Colonic mucosa (tissue), 4 donors: ENCODE measurements at regions of chr12 and their contacts with region 1.

Region 1: DNA sequence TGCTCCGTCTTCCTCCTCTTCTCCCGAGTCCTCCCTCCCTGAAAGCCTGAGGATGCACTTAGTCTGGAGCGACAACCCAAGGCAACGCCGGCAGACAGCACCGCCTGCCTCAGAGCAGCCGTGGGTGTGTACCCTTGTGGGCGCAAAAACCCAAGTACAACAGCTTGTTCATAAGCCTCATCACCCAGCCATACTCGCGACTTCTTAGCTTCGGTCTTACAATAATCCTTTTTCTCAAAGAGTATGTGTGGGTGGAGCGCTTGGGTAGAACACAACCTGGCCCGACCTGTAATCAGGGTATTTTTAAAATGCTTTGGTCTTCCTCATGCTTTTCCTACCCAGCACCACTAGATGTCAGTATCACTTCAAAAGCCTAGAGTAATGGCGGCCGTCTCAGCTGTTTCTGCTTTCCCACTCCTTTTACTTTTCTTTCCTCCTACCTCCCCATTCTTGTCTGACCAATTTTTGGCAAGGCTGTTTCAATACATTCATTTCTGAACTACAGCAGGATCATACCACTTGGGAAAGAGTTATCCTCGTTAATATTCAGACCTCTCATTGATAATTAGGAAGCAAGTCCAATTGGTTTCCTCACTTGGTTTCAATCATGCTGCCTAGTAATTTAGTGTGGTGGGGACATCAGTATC is 198.9 kb downstream of the EPS8 start:
- DNase-seq: peak; percentile 70
- H3K4me3 ChIP-seq: peak overlapping the region; percentile 7
- H3K27ac ChIP-seq: no peak overlapping the region
- H3K4me1 ChIP-seq: no peaks in the 10 kb centered on the region
- H3K27me3 ChIP-seq: no peaks in the 10 kb centered on the region
- CTCF ChIP-seq: peak; percentile 81

Region 2: DNA sequence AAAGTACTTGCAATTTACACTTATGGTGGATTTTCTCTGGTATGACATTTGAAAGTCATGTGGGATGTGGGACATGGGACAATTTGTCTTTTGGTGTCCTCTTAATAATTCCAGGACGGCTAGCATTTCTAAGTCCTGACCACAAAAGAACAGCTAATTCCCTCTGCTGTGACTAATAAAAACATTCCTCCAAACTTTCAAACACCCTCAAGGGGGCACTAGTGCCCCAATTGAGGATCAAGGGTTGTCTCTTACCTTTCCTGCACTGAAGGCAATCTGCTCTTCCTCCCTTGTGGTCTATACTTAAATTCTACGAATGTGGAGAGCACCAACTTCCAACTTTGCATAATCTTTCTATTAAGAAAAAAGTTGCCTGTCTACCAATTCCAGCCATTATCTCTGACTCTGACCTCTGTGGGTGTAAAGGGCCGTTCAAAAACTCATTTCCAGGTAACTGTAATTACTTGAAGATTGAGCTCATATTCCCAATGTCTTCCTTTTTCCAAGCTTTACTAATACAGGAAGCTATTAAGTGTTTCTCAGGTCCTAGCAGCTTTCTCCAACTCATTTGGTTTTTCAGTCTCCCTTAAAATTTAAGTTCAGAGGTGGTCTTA is 57.8 kb before region 1 on chr12:
- intact Hi-C with region 1: loop called (anchors 2 kb)
- DNase-seq: peak; percentile 71
- H3K4me3 ChIP-seq: no peak overlapping the region
- H3K27ac ChIP-seq: peak overlapping the region; percentile 57
- H3K4me1 ChIP-seq: peaks cover 8% of the 10 kb centered on the region
- H3K27me3 ChIP-seq: no peaks in the 10 kb centered on the region
- CTCF ChIP-seq: peak; percentile 50

Region 3: GRCh38 chr12:15650399-15651128 is 60.3 kb after region 1 on chr12:
- intact Hi-C with region 1: no loop called
- DNase-seq: no peak
- H3K4me3 ChIP-seq: no peak overlapping the region
- H3K27ac ChIP-seq: no peak overlapping the region
- H3K4me1 ChIP-seq: no peaks in the 10 kb centered on the region
- H3K27me3 ChIP-seq: no peaks in the 10 kb centered on the region
- CTCF ChIP-seq: no peak

Region 4: GRCh38 chr12:15856097-15856982 is 266.0 kb after region 1 on chr12:
- intact Hi-C with region 1: loop called (anchors 2 kb)
- DNase-seq: peak; percentile 78
- H3K4me3 ChIP-seq: no peak overlapping the region
- H3K27ac ChIP-seq: no peak overlapping the region
- H3K4me1 ChIP-seq: peaks cover 5% of the 10 kb centered on the region
- H3K27me3 ChIP-seq: no peaks in the 10 kb centered on the region
- CTCF ChIP-seq: peak; percentile 76